Activated CD4-positive, alpha-beta T cell treated with anti-CD3 and anti-CD28 coated beads, Interleukin-2, amount 10 ng/mL, durations not matched to agents 7 days and 5 days (primary cell): ENCODE measurements at regions of chr12 and their contacts with region 1.

Region 1: GRCh38 chr12:121494093-121494787 is 86.6 kb downstream of the KDM2B start:
- DNase-seq: peak; percentile 61
- H3K4me3 Mint-ChIP-seq: no peak overlapping the region
- H3K27ac Mint-ChIP-seq: no peak overlapping the region
- H3K4me1 Mint-ChIP-seq: peaks cover 20% of the 10 kb centered on the region
- H3K27me3 Mint-ChIP-seq: no peaks in the 10 kb centered on the region

Region 2: DNA sequence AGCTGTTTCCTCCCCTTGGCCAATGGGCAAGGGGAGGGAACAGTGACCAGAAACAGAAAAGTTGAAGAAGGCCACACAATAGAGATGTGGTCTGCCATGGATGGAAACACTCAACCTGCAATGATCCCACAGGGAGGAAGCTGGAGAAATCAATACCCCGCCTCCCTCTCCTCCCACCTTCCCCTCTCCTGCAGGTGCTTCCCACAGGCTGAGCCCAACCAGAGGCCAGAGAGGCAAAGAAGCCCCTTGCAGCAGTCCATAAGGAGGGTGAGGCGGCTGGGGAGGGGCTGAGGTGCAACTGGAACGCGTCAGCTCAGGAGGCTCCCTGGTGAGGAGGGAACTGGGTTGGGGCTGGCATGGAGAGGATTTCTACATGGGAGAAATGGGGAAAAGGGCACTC is 10.3 kb before region 1 on chr12:
- CTCF ChIA-PET with region 1: interaction called, 11 read pairs
- POLR2A ChIA-PET with region 1: no interaction called
- DNase-seq: no peak
- H3K4me3 Mint-ChIP-seq: no peak overlapping the region
- H3K27ac Mint-ChIP-seq: no peak overlapping the region
- H3K4me1 Mint-ChIP-seq: peaks cover under 1% of the 10 kb centered on the region
- H3K27me3 Mint-ChIP-seq: no peaks in the 10 kb centered on the region